Heart left ventricle (tissue), 16 donors: ENCODE measurements at regions of chr6 and their contacts with region 1.

Region 1: GRCh38 chr6:53544470-53545308 is at the start of gene GCLC:
- DNase-seq: peak; percentile 95 to 97 (median 96)
- ATAC-seq: peak; percentile 67 to 85 (median 82)
- H3K4me3 ChIP-seq: peak within 1 kb of the TSS; percentile 66 to 94 (median 78)
- H3K27ac ChIP-seq: peak within 1 kb of the TSS; percentile 82 to 98 (median 95)
- H3K4me1 ChIP-seq: peaks cover 0 to 50% (median 27%) of the 10 kb centered on the region in 12 donors
- H3K27me3 ChIP-seq: no peaks in the 10 kb centered on the region
- CTCF ChIP-seq: peak; percentile 36 to 89 (median 76)
- POLR2A ChIP-seq: peak; percentile 62 to 94
- total RNA-seq, gene GCLC: 15.2 to 42.9 (median 32.4) TPM

Region 2: DNA sequence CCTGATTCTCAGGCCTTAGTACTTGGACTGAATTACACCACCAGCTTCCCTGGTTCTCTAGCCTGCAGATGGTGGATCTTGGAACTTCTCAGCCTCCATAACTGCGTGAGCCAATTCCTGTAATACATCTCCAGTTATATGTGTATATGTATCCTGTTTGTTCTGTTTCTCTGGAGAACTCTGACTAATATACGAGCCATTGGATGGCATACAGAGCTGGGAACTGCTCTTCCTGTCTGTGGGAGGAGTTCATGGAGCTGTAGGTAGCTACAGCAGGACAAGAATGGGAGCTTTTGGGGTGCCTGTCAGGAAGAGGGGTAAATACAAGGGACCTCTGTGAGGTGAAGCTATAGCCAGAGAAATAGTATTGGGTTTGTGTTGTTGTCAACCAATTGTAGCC is 832.6 kb before region 1 on chr6:
- intact Hi-C with region 1: no loop called
- DNase-seq: no peak
- ATAC-seq: no peak
- H3K4me3 ChIP-seq: no peak overlapping the region
- H3K27ac ChIP-seq: no peak overlapping the region
- H3K4me1 ChIP-seq: peaks cover 0 to 3% (median 0%) of the 10 kb centered on the region in 12 donors
- H3K27me3 ChIP-seq: no peaks in the 10 kb centered on the region
- CTCF ChIP-seq: no peak
- POLR2A ChIP-seq: no peak

Region 3: DNA sequence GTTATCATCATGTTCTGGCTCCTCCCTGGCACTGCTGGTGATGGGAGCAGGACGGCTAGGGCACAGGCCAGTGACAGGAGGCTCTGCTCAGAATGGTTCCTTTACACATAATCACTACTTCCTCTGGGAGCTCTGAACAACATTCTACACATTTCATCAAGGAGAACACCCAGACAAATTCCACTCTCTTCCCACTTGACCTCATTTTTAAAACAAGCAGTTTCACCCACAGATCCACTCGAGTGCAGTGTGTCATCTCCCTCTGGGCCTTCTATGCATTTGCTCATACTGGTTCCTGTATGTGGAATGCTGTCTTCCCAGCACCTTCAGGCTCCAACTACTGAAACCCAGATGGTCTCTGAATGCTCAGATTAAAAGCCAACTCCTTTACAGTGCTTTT is 280.8 kb before region 1 on chr6:
- intact Hi-C with region 1: no loop called
- DNase-seq: no peak
- ATAC-seq: peak in 2 of 4 donors; percentile 27 to 41
- H3K4me3 ChIP-seq: no peak overlapping the region
- H3K27ac ChIP-seq: no peak overlapping the region
- H3K4me1 ChIP-seq: peaks cover 0 to 32% (median 11%) of the 10 kb centered on the region in 12 donors
- H3K27me3 ChIP-seq: no peaks in the 10 kb centered on the region
- CTCF ChIP-seq: no peak
- POLR2A ChIP-seq: no peak

Region 4: DNA sequence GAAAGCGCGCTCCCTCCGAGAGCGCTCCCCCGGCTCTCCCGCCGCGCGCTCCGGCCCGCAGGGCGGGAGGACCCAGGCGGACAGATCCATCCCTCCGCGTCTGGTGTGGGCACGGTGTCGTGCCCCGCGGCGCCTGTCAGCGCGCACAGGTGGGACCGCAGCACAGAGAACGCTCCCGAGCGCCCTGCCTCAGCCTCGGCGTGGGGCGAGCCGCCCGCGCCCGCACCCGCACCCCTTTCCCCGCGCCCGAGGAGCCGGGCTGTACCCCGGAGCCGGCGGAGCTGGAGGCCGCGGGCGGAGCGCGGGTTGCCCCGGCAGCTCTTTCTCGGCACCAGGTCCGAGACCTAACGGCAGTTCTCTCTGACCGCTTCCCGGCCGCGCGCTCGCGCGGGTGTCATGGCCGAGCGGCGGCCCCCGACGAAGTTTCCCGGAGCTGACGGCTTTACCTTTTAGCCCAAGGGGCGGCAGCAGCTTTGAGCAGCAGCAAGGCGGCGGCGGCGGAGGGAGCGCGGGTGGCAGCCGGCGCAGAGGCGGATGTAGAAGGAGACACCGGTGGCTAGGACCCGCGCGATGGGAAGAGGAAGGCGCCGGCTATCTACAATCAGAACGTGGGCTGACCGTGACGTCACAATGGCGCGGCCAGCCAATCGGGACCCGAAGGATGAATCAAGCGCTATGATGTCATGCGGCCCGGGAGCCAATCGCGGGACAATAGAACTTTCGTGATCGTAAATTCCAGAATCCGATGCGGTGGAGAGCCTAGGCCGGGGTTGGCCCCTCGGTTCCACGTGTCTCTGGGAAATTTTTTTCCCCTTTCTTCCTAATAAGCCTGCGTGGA is 196.1 kb before region 1 on chr6 and contains the start of gene ELOVL5:
- intact Hi-C with region 1: loop called in 1 of 10 experiments (anchors 5 kb)
- DNase-seq: peak; percentile 98 to 99 (median 99)
- ATAC-seq: peak; percentile 87 to 96 (median 94)
- H3K4me3 ChIP-seq: peak within 1 kb of the TSS; percentile 75 to 98 (median 90)
- H3K27ac ChIP-seq: peak within 1 kb of the TSS; percentile 89 to 100 (median 97)
- H3K4me1 ChIP-seq: peaks cover 3 to 42% (median 15%) of the 10 kb centered on the region in 12 donors
- H3K27me3 ChIP-seq: no peaks in the 10 kb centered on the region
- CTCF ChIP-seq: peak in 4 of 12 donors; percentile 7 to 14 (median 10)
- POLR2A ChIP-seq: peak; percentile 34 to 88
- total RNA-seq, gene ELOVL5: 17.3 to 47.9 (median 29.3) TPM

Region 5: DNA sequence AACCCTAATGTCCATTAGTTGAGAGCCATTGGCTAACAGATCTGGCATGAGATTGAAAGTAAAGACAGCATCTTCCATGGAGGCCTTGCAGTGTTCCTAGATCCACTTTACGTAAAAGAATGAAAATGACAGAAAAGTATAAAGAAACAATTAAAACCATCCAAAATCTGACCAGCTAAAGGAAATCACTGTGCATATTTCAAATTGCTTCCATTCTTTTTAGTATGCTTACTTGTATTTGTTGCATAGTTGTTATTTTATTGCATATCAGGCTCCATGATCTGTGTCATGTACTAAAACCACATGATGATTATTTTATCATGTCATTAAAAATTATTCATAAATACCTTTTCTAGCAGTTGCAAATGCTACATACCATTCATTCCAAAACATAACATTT is 67.7 kb before region 1 on chr6:
- intact Hi-C with region 1: no loop called
- DNase-seq: no peak
- ATAC-seq: no peak
- H3K4me3 ChIP-seq: no peak overlapping the region
- H3K27ac ChIP-seq: no peak overlapping the region
- H3K4me1 ChIP-seq: no peaks in the 10 kb centered on the region
- H3K27me3 ChIP-seq: no peaks in the 10 kb centered on the region
- CTCF ChIP-seq: no peak
- POLR2A ChIP-seq: no peak

Region 6: DNA sequence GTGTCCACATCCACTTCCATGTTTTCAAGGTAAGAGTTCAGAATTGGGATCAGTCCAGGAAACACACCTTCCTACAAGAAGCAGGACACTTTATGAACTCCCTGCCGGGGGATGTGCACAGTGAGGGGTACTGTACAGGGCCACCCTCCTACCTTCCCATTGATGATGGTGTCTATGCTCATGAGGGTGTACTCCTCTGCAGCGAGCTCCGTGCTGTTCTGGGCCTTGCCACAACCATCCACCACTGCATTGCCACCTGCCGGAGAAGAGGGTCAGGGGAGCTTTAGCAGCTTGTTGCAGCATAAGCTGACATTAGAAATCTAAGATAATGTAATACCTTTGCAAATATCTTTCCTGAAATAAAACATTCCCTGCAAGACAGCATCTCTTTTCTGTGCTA is 44.6 kb before region 1 on chr6:
- intact Hi-C with region 1: no loop called
- DNase-seq: no peak
- ATAC-seq: no peak
- H3K4me3 ChIP-seq: no peak overlapping the region
- H3K27ac ChIP-seq: no peak overlapping the region
- H3K4me1 ChIP-seq: no peaks in the 10 kb centered on the region
- H3K27me3 ChIP-seq: no peaks in the 10 kb centered on the region
- CTCF ChIP-seq: no peak
- POLR2A ChIP-seq: no peak

Region 7: DNA sequence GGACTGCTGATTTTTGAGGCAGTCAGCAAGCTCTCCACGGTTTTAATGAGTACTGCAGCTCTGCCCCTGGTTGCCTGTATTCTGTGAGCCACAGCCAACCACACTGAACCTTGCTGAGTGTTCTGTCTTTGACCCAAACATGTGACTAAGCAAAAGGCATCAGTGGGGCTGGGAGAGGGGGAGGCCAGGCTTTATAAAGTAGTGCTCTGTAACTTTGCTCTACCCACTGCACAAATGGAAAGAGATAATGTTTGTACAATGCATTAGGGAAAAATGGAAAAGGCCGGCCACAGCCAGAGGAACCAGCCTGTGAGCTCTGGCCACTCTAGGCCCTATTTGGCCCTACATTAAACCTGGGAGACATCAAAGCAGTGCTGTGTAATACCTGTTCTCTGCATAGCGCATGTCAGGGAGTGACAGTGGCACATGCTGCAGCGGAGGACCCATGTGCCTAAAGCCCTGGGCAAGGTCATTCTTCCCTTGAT is 98.8 kb after region 1 on chr6:
- intact Hi-C with region 1: loop called in 2 of 10 experiments (anchors 1 to 5 kb)
- DNase-seq: no peak
- ATAC-seq: peak; percentile 33 to 77 (median 64)
- H3K4me3 ChIP-seq: no peak overlapping the region
- H3K27ac ChIP-seq: peak overlapping the region in 5 of 12 donors; percentile 23 to 43 (median 27)
- H3K4me1 ChIP-seq: peaks cover 0 to 35% (median under 1%) of the 10 kb centered on the region in 12 donors
- H3K27me3 ChIP-seq: no peaks in the 10 kb centered on the region
- CTCF ChIP-seq: no peak
- POLR2A ChIP-seq: no peak

Region 8: GRCh38 chr6:53664623-53665022 is 119.9 kb after region 1 on chr6:
- intact Hi-C with region 1: loop called in 1 of 10 experiments (anchors 5 kb)
- DNase-seq: peak; percentile 71 to 87 (median 78)
- ATAC-seq: peak; percentile 83 to 91 (median 86)
- H3K4me3 ChIP-seq: peak overlapping the region; percentile 11 to 62 (median 56)
- H3K27ac ChIP-seq: peak overlapping the region; percentile 63 to 95 (median 90)
- H3K4me1 ChIP-seq: peaks cover 0 to 26% (median 0%) of the 10 kb centered on the region in 12 donors
- H3K27me3 ChIP-seq: peaks cover 0 to 5% (median 0%) of the 10 kb centered on the region in 9 donors
- CTCF ChIP-seq: no peak
- POLR2A ChIP-seq: no peak

Region 9: GRCh38 chr6:53725791-53726431 is 181.2 kb after region 1 on chr6:
- intact Hi-C with region 1: loop called in 3 of 10 experiments (anchors 5 to 10 kb)
- DNase-seq: peak; percentile 68 to 86 (median 78)
- ATAC-seq: peak in 3 of 4 donors; percentile 88 to 89 (median 89)
- H3K4me3 ChIP-seq: no peak overlapping the region
- H3K27ac ChIP-seq: no peak overlapping the region
- H3K4me1 ChIP-seq: peaks cover 0 to 6% (median under 1%) of the 10 kb centered on the region in 12 donors
- H3K27me3 ChIP-seq: peaks cover 0 to 3% (median 0%) of the 10 kb centered on the region in 9 donors
- CTCF ChIP-seq: peak; percentile 88 to 99 (median 96)
- POLR2A ChIP-seq: no peak